Mammary epithelial cell (primary cell): ENCODE measurements at regions of chr12 and their contacts with region 1.

Region 1: DNA sequence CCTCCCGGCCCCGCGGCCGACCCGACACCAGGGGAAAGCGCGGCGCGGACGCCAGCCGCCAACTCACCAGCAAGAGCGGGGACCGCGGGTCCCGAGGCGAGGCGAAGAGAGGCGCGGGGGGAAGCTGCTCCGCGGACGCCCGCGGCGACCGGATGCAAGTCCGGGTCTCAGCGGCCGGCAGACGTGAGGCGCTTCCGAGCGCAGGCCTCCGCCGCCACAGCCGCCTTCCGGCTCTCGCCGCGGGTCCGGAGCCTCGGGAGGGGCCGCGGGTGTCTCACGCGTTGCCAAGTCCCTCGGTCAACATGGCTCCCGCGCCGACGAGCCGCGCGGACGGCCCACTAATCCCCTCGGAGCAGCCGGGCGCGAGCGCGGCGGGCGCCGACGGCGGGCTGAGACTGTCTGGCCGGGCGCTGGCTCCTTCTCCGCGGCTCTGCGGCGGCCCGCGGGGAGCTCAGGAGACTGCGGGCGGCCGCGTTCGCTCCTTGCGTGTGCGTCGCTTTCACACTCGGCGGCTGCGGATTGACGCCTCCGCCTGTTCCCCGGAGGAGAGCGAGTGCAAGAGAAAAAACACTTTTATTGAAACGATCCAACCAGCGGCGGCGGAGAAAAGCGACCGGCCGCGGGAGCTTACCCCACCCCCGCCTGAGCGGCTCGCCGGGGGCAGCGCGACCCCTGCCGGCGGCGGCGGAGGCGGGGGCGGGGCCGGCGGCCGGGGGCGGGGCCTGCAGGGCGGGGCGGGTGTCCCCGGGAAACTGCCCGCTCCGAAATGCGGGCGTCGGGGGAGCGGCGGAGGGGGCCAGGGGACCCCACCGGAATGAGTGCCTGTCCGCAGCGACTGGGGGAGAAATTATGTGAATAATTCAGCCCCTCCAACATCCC is at the start of gene CDK17:
- DNase-seq: peak; percentile 80
- H3K4me3 ChIP-seq: peak within 1 kb of the TSS; percentile 66 to 83 (median 74)
- H3K27ac ChIP-seq: peak within 1 kb of the TSS; percentile 88
- H3K4me1 ChIP-seq: peaks cover 9% of the 10 kb centered on the region
- H3K27me3 ChIP-seq: no peaks in the 10 kb centered on the region
- CTCF ChIP-seq: peak in 1 of 2 donors; percentile 44
- total RNA-seq, gene CDK17: 42.5 to 64.2 TPM

Region 2: DNA sequence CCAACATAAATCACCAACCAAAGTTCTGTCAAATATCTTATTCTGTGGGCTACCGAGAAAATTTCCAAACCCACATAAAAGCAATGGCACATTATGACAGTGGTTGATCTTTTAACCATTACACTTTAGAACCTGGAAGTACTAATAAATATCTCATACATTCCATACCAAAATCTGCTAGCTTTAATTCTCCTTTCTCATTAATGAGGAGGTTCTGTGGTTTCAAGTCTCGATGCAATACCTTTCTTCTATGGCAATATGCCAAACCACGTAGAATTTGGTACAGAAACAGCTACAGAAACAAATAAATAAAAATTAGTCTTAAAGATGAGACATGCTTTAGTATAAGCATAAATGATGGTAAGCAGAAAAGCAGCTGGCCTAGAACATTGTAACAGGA is 105.3 kb before region 1 on chr12:
- CTCF ChIA-PET with region 1: no interaction called
- dilution Hi-C with region 1: no loop called
- in situ Hi-C with region 1: no loop called
- intact Hi-C with region 1: loop called (anchors 5 kb)
- DNase-seq: peak; percentile 37
- H3K4me3 ChIP-seq: no peak overlapping the region
- H3K27ac ChIP-seq: no peak overlapping the region
- H3K4me1 ChIP-seq: peaks cover 6% of the 10 kb centered on the region
- H3K27me3 ChIP-seq: no peaks in the 10 kb centered on the region
- CTCF ChIP-seq: no peak

Region 3: DNA sequence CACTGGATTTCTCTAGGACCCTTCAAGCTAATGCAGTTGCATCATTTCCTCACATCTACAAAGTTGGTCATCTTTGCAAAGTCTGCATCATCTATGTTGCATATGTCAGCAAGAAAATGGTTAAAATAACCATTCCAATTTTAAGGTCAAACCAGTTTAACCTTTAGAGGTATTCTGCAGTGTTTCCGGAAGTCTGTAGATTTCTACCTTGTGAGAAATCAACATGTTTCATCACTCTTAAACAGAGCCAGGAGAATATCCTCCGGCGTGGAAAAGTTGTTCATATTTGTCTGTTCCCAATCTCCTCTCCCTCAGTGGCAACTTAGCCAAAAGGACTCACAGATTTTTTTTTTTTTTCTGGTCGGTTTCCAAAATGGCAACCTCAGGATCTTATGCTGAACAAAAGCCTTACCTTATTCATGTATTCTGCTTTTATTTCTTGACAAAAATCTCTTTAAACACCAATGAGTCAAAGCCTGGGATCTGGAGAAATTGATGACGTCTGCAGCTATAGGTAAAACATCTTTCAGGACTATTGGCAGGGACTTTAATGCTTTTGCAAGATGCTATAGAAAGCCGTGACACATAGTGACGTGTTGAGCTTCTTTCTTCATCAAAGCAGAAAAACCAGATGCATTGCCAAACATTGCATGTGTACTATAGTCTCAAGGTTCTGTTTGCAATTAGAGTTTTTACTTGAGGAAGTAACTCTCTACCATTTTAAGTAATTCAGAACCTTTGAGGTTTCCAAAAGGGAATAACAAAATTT is 16.1 kb after region 1 on chr12:
- CTCF ChIA-PET with region 1: no interaction called
- dilution Hi-C with region 1: no loop called
- in situ Hi-C with region 1: no loop called
- intact Hi-C with region 1: loop called (anchors 2 kb)
- DNase-seq: peak; percentile 95
- H3K4me3 ChIP-seq: no peak overlapping the region
- H3K27ac ChIP-seq: peak overlapping the region; percentile 73
- H3K4me1 ChIP-seq: peaks cover 26% of the 10 kb centered on the region
- H3K27me3 ChIP-seq: no peaks in the 10 kb centered on the region
- CTCF ChIP-seq: no peak

Region 4: DNA sequence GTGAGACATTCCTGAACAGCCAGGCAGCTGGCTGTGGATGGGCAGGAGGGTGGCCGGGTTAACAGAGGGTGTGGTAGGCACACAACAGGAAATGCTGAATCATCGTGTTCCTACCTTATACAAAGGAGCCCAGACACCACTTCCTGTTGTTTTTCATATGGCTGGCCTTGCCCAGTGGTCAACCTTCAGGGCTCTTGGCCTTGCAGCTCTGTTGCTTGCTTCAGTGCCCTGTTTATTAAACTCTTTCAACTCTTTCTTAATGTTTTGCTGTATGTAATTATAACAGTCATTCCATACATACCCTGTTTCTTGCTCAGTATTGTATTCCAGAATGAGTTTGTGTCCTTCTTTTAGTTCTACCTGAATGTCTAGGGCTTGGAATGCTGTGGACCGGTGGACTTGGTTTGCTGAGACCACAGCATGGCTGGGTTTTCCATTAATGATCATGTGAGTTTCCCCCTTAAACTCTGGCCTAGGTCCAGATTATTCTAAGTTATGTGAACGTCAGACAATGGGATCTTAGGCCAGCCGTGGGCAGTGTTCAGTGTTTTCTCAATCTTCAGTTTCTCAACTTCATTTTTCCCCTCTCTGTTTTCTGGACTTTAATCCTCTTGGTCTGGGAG is 101.1 kb after region 1 on chr12:
- CTCF ChIA-PET with region 1: no interaction called
- dilution Hi-C with region 1: no loop called
- in situ Hi-C with region 1: loop called in 1 of 2 experiments (anchors 10 kb)
- intact Hi-C with region 1: loop called (anchors 5 kb)
- DNase-seq: peak; percentile 88
- H3K4me3 ChIP-seq: no peak overlapping the region
- H3K27ac ChIP-seq: peak overlapping the region; percentile 93
- H3K4me1 ChIP-seq: peaks cover 31% of the 10 kb centered on the region
- H3K27me3 ChIP-seq: no peaks in the 10 kb centered on the region
- CTCF ChIP-seq: no peak